ENCODE measurements at regions of chr6 and their contacts with region 1.

Region 1: GRCh38 chr6:36947570-36948351 is 6.8 kb upstream of the PI16 start:
- DNase-seq: peak in 28 of 35 experiments; percentile 23 to 66 (median 38)
- ATAC-seq: peak; percentile 85 to 99 (median 94)
- H3K4me3 ChIP-seq: no peak overlapping the region
- H3K4me3 Mint-ChIP-seq: peak overlapping the region in 1 of 3 donors; percentile 48
- H3K27ac ChIP-seq: peak overlapping the region; percentile 2
- H3K27ac Mint-ChIP-seq: peak overlapping the region; percentile 66 to 74
- H3K4me1 ChIP-seq: peaks cover 11 to 24% of the 10 kb centered on the region in 2 experiments
- H3K4me1 Mint-ChIP-seq: peaks cover 24 to 42% (median 39%) of the 10 kb centered on the region in 3 donors
- H3K27me3 ChIP-seq: peaks cover 0 to 2% of the 10 kb centered on the region in 2 experiments
- H3K27me3 Mint-ChIP-seq: no peaks in the 10 kb centered on the region

Region 2: DNA sequence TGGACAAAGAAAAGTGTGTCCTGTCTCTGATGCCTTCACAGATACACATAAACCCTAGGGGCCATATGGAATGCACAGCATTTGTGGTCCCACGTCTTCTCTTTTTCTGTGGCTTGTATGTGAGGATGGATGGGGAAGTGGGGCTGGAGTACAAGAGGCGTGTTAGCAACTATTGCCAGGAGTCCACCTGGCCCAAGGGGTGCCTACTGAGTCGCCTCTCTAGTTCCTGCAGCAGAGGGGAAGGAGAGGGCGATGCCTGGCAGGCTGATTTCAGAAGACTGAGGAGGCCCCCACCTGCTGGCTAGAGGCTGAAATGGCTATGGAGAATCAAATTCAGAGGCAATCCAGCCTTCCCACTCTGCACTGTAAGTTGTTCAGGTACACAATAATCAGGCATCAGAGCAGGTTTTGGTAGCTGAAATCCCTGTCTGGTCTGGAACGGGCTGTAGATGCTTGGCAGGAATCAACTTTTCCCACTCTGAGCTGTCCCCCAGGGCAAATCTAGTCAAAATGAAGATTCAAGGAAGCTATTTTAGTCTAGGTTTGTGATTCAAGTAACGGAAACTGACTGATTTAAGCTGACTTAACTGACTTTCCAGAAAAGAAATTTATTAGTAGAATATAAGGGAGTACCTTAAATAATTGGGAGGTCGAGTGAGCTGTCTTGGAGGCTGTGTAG is 1620.3 kb before region 1 on chr6:
- CTCF ChIA-PET with region 1: no interaction called
- POLR2A ChIA-PET with region 1: no interaction called
- DNase-seq: peak; percentile 58 to 84 (median 74)
- ATAC-seq: peak; percentile 73 to 84 (median 78)
- H3K4me3 ChIP-seq: no peak overlapping the region
- H3K4me3 Mint-ChIP-seq: peak overlapping the region in 1 of 3 donors; percentile 2
- H3K27ac ChIP-seq: peak overlapping the region; percentile 39
- H3K27ac Mint-ChIP-seq: peak overlapping the region; percentile 87 to 93
- H3K4me1 ChIP-seq: peaks cover 2 to 23% of the 10 kb centered on the region in 2 experiments
- H3K4me1 Mint-ChIP-seq: peaks cover 20 to 33% (median 29%) of the 10 kb centered on the region in 3 donors
- H3K27me3 ChIP-seq: no peaks in the 10 kb centered on the region
- H3K27me3 Mint-ChIP-seq: no peaks in the 10 kb centered on the region

Region 3: GRCh38 chr6:37029249-37029971 is 81.6 kb after region 1 on chr6:
- CTCF ChIA-PET with region 1: interaction called in 1 of 2 experiments, 19 read pairs
- POLR2A ChIA-PET with region 1: no interaction called
- DNase-seq: peak in 19 of 35 experiments; percentile 16 to 65 (median 28)
- ATAC-seq: peak; percentile 64 to 75 (median 67)
- H3K4me3 ChIP-seq: no peak overlapping the region
- H3K4me3 Mint-ChIP-seq: no peak overlapping the region
- H3K27ac ChIP-seq: no peak overlapping the region
- H3K27ac Mint-ChIP-seq: peak overlapping the region; percentile 2 to 61
- H3K4me1 ChIP-seq: peaks cover 0 to 16% of the 10 kb centered on the region in 2 experiments
- H3K4me1 Mint-ChIP-seq: peaks cover 25 to 47% (median 28%) of the 10 kb centered on the region in 3 donors
- H3K27me3 ChIP-seq: no peaks in the 10 kb centered on the region
- H3K27me3 Mint-ChIP-seq: no peaks in the 10 kb centered on the region

Region 4: DNA sequence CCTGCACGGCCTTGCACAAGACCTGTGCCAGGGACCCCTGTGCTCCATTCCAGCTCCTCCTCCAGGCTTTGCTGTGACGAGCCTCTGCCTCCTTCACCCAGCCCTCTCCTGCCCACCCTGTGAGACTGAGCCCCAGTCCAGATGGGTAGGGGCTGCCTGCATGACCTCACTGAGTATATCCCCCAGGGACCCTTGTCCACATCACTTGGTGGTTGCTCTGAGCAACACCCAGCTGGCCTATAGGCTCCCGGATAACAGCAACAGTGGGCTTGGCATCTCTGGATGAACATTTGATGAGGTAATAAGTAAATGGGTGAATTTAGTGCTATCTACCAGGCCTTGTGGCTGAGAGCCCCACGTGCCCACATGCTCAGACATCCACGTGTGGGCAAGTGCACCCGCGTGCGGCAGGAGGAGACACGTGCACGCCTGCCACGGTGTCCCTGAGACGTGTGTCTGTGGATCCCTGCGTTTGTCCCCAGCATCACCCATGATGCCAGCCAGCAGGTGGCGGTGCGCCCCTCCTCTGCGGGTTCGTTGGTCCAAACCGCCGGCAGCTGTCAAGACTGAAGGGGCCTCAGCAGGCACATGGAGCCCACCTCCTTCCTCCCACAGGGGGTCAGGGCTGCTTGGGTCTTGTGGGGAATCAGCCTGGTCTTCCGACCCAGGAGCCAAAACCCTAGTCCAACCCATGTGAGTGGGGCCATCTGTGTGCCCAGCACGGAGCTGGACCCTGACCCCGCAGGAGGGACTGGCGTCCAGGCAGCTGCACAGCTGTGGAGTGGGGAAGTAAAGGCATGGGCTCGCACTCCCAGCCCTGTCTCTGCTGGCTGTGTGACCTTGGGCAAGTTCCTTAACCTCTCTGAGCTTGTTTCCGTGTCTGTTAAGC is 103.6 kb after region 1 on chr6:
- CTCF ChIA-PET with region 1: no interaction called
- POLR2A ChIA-PET with region 1: no interaction called
- DNase-seq: peak; percentile 76 to 93 (median 86)
- ATAC-seq: peak; percentile 53 to 79 (median 62)
- H3K4me3 ChIP-seq: no peak overlapping the region
- H3K4me3 Mint-ChIP-seq: peak overlapping the region; percentile 31 to 72 (median 49)
- H3K27ac ChIP-seq: peak overlapping the region; percentile 93
- H3K27ac Mint-ChIP-seq: peak overlapping the region; percentile 87 to 95
- H3K4me1 ChIP-seq: peaks cover 44 to 60% of the 10 kb centered on the region in 2 experiments
- H3K4me1 Mint-ChIP-seq: peaks cover 58 to 66% (median 62%) of the 10 kb centered on the region in 3 donors
- H3K27me3 ChIP-seq: no peaks in the 10 kb centered on the region
- H3K27me3 Mint-ChIP-seq: no peaks in the 10 kb centered on the region

Measured in T-cell (primary cell).